ENCODE measurements at regions of chr15 and their contacts with region 1.

Region 1: GRCh38 chr15:68298882-68299381 is 21.4 kb downstream of the FEM1B start:
- DNase-seq: no peak
- ATAC-seq: no peak
- H3K4me3 ChIP-seq: no peak overlapping the region
- H3K27ac ChIP-seq: no peak overlapping the region
- H3K4me1 ChIP-seq: peaks cover 1% of the 10 kb centered on the region
- H3K27me3 ChIP-seq: no peaks in the 10 kb centered on the region
- CTCF ChIP-seq: no peak
- POLR2A ChIP-seq: no peak
- RAD21 ChIP-seq: no peak

Region 2: DNA sequence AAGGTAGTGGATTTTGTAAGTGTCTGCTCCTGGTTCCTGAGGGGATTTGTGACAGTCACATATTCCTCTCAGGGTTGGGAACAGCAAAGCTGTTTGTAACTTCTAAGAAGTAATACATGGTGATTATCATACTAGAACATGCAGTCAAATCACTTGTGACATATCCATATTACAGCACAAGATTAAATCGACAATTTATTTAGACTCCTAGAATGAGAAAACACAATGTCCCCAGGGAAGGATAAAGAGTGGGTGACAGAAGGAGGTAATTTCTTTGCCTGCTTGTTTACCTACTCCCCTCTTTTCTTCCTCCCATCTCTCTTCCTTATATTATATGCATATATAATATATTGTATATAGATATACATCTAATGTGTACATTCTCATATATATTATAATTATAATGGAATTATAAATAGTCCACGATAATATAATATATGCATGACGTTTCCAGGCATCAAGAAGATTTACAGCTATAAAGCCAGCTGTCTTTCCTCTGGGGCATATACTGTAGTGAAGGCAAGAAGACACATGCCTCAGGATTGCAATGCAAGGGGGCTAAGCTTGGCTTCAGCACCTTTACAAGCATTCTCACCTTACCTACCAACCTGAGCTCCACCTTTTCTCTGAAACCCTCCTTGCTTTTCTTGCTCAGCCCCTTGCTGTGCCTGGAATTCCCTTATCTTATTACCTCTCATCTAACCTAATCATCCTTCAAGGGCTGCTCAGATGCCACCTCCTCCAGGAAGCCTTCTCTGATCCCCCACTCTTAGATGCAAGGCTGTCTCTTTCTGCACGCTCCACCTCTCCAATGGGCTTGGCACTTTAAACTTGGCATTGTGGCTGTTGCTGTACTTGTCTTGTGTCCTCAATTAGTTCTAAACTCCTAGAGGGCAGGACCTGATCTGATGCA is 317.9 kb before region 1 on chr15:
- CTCF ChIA-PET with region 1: no interaction called
- POLR2A ChIA-PET with region 1: no interaction called
- dilution Hi-C with region 1: no loop called
- in situ Hi-C with region 1: no loop called
- intact Hi-C with region 1: no loop called
- DNase-seq: no peak
- ATAC-seq: no peak
- H3K4me3 ChIP-seq: no peak overlapping the region
- H3K27ac ChIP-seq: no peak overlapping the region
- H3K4me1 ChIP-seq: no peaks in the 10 kb centered on the region
- H3K27me3 ChIP-seq: peaks cover 12% of the 10 kb centered on the region
- CTCF ChIP-seq: no peak
- POLR2A ChIP-seq: no peak
- RAD21 ChIP-seq: no peak

Region 3: DNA sequence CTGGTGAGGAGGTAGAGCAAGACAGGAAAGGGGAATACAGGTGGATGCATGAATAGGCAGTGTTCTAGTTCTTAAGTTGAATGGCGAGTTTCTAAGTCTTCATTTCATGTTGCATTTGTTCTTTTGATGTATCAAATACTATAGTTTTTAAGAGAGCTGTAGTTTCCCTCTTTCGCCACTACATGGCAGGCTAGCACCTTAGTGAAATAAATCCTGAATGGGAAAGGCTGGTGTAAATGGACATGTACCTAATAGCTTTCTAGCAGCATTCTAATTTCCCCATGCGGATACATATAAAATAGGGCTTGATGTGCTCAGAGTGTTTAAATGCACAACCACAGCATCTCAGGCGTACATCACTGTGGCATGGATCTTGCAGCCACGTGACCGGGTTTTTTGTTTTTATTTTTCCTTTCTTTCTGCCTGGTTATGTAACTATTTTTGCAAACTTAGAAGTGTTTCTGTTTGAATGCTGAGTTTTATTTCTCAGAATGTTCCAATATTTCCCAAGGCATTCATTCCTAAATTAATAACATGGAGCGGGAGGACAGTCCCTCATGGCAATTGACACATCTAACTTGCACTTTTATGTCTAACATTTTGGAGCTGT is 45.9 kb before region 1 on chr15:
- CTCF ChIA-PET with region 1: interaction called, 4 read pairs
- POLR2A ChIA-PET with region 1: no interaction called
- dilution Hi-C with region 1: no loop called
- in situ Hi-C with region 1: no loop called
- intact Hi-C with region 1: loop called (anchors 2 kb)
- DNase-seq: peak; percentile 85
- ATAC-seq: peak; percentile 79
- H3K4me3 ChIP-seq: no peak overlapping the region
- H3K27ac ChIP-seq: no peak overlapping the region
- H3K4me1 ChIP-seq: no peaks in the 10 kb centered on the region; the same call in 1 of the 2 replicates
- H3K27me3 ChIP-seq: peaks cover 2% of the 10 kb centered on the region; the same call in 1 of the 2 replicates
- CTCF ChIP-seq: peak; percentile 91
- POLR2A ChIP-seq: no peak
- RAD21 ChIP-seq: peak; percentile 91

Region 4: DNA sequence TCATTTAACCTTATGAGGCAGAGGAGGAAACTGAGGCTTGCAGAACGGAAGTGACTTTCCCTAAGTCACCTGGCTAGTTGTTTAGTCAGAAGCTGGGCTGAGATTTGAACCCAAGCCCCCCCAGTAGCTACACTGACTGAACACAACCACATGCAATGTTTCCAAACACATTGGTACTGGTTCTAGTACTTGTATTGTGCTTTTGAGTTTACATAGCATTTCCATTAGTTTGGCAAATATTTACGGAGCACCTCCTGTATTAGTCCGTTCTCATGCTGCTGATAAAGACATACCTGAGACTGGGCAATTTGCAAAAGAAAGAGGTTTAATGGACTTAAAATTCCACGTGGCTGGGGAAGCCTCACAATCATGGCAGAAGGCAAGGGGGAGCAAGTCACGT is 189.4 kb after region 1 on chr15:
- CTCF ChIA-PET with region 1: interaction called, 14 read pairs
- POLR2A ChIA-PET with region 1: no interaction called
- dilution Hi-C with region 1: no loop called
- in situ Hi-C with region 1: no loop called
- intact Hi-C with region 1: no loop called
- DNase-seq: no peak
- ATAC-seq: no peak
- H3K4me3 ChIP-seq: no peak overlapping the region
- H3K27ac ChIP-seq: no peak overlapping the region
- H3K4me1 ChIP-seq: peaks cover 23% of the 10 kb centered on the region
- H3K27me3 ChIP-seq: peaks cover 14% of the 10 kb centered on the region
- CTCF ChIP-seq: no peak
- POLR2A ChIP-seq: no peak
- RAD21 ChIP-seq: no peak

Region 5: GRCh38 chr15:68717951-68718350 is 419.0 kb after region 1 on chr15:
- CTCF ChIA-PET with region 1: no interaction called
- POLR2A ChIA-PET with region 1: no interaction called
- dilution Hi-C with region 1: no loop called
- in situ Hi-C with region 1: no loop called
- intact Hi-C with region 1: no loop called
- DNase-seq: no peak
- ATAC-seq: no peak
- H3K4me3 ChIP-seq: no peak overlapping the region
- H3K27ac ChIP-seq: no peak overlapping the region
- H3K4me1 ChIP-seq: no peaks in the 10 kb centered on the region
- H3K27me3 ChIP-seq: no peaks in the 10 kb centered on the region
- CTCF ChIP-seq: no peak
- POLR2A ChIP-seq: no peak
- RAD21 ChIP-seq: no peak